Heart left ventricle (tissue), 16 donors: ENCODE measurements at regions of chr9 and their contacts with region 1.

Region 1: GRCh38 chr9:136865735-136866103 is 389 bp downstream of the EDF1 start:
- DNase-seq: peak in 3 of 5 donors; percentile 25 to 49 (median 43)
- ATAC-seq: peak in 2 of 4 donors; percentile 36 to 43
- H3K4me3 ChIP-seq: peak overlapping the region; percentile 41 to 97 (median 82)
- H3K27ac ChIP-seq: peak overlapping the region in 11 of 12 donors; percentile 76 to 96 (median 90)
- H3K4me1 ChIP-seq: peaks cover 0 to 27% (median 19%) of the 10 kb centered on the region in 12 donors
- H3K27me3 ChIP-seq: no peaks in the 10 kb centered on the region
- CTCF ChIP-seq: no peak
- POLR2A ChIP-seq: no peak

Region 2: GRCh38 chr9:136671646-136672430 is 193.9 kb before region 1 on chr9:
- intact Hi-C with region 1: no loop called
- DNase-seq: peak in 2 of 5 donors; percentile 40 to 50
- ATAC-seq: peak in 2 of 4 donors; percentile 2 to 13
- H3K4me3 ChIP-seq: peak overlapping the region in 10 of 12 donors; percentile 1 to 80 (median 50)
- H3K27ac ChIP-seq: peak overlapping the region in 10 of 12 donors; percentile 15 to 89 (median 52)
- H3K4me1 ChIP-seq: peaks cover 0 to 34% (median 3%) of the 10 kb centered on the region in 12 donors
- H3K27me3 ChIP-seq: peaks cover 0 to 7% (median 0%) of the 10 kb centered on the region in 9 donors
- CTCF ChIP-seq: peak; percentile 67 to 85 (median 76)
- POLR2A ChIP-seq: no peak

Region 3: GRCh38 chr9:136814725-136815421 is 50.8 kb before region 1 on chr9:
- intact Hi-C with region 1: loop called in 1 of 10 experiments (anchors 2 kb)
- DNase-seq: no peak
- ATAC-seq: no peak
- H3K4me3 ChIP-seq: no peak overlapping the region
- H3K27ac ChIP-seq: no peak overlapping the region
- H3K4me1 ChIP-seq: peaks cover 0 to 17% (median 11%) of the 10 kb centered on the region in 12 donors
- H3K27me3 ChIP-seq: no peaks in the 10 kb centered on the region
- CTCF ChIP-seq: no peak
- POLR2A ChIP-seq: no peak

Region 4: DNA sequence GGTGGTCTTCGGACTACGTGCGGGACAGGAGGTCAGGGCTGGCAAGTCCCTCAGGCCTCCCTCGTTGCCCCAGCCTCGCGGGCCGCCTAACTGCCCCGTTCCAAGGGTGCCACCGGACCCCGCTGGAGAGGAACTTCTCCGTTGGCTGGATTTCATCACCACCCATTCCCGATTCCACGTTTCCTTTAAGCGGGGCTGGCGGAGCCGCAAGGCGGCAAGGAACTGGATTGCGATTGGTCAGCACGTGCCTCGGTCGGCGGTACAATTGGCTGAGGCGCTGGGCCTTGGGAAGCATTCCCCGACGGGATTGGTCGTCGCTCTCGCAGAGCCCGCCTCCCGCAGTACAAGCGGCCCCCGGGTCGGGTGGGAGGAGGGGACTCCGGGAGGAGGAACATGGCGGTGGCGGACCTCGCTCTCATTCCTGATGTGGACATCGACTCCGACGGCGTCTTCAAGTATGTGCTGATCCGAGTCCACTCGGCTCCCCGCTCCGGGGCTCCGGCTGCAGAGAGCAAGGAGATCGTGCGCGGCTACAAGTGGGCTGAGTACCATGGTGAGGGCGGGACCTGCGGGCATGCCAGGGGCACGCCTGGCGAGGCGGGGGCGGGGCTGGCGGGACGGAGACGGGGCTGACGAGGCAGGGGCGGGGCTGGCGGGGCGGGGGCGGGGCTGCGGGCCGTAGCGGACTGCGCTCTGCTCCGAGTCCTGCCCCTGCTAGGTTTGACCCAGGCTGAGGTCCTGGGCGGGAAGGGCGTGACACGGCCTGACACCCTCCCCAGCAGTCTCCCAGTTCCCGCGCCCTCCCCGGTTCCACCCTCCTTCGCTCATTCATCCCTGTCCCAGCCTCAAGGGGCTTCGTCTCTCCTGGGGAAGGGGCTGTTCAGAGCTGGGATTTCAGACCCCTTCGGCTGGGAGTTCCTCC is 16.4 kb before region 1 on chr9 and contains the start of gene PHPT1:
- intact Hi-C with region 1: loop called in 1 of 10 experiments (anchors 2 kb)
- DNase-seq: peak; percentile 99
- ATAC-seq: peak; percentile 84 to 94 (median 89)
- H3K4me3 ChIP-seq: peak within 1 kb of the TSS; percentile 63 to 93 (median 84)
- H3K27ac ChIP-seq: peak within 1 kb of the TSS; percentile 80 to 97 (median 92)
- H3K4me1 ChIP-seq: peaks cover 4 to 61% (median 27%) of the 10 kb centered on the region in 12 donors
- H3K27me3 ChIP-seq: peaks cover 0 to 28% (median 13%) of the 10 kb centered on the region in 9 donors
- CTCF ChIP-seq: no peak
- POLR2A ChIP-seq: peak; percentile 71 to 85
- total RNA-seq, gene PHPT1: 230 to 386 (median 266) TPM

Region 5: DNA sequence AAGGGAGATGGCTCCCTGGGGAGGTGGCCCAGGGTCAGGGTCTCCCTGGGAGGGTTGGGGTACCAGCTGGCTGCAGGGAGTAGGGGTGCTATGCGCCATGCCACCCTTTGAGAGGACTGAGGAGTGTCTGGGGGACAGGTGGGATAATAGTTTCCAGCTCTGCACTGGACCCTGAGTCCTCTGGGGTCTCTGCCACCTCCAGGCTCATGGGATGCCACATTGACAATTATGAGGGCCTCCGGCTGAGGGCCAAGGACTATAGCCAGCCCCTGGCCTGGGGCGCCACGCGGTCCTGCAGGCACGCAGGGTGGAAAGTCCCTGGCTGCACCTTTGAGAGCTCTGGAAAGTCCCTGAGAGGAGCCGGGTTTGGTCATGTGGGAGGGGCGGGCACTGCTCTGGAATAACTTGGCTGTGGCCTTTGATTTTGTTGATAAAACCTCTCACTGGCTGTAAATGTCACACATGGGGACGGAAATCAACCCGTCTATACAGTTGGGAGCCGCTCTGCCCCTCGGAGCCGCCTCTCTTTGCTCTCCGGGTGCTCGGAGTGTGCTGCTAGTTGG is 36.6 kb after region 1 on chr9:
- intact Hi-C with region 1: loop called in 1 of 10 experiments (anchors 2 kb)
- DNase-seq: peak in 4 of 5 donors; percentile 78 to 85 (median 82)
- ATAC-seq: peak; percentile 84 to 94 (median 91)
- H3K4me3 ChIP-seq: peak overlapping the region in 5 of 12 donors; percentile 1 to 23 (median 11)
- H3K27ac ChIP-seq: peak overlapping the region; percentile 30 to 94 (median 80)
- H3K4me1 ChIP-seq: peaks cover 0 to 37% (median 32%) of the 10 kb centered on the region in 12 donors
- H3K27me3 ChIP-seq: no peaks in the 10 kb centered on the region
- CTCF ChIP-seq: no peak
- POLR2A ChIP-seq: peak in 1 of 2 donors; percentile 25

Region 6: DNA sequence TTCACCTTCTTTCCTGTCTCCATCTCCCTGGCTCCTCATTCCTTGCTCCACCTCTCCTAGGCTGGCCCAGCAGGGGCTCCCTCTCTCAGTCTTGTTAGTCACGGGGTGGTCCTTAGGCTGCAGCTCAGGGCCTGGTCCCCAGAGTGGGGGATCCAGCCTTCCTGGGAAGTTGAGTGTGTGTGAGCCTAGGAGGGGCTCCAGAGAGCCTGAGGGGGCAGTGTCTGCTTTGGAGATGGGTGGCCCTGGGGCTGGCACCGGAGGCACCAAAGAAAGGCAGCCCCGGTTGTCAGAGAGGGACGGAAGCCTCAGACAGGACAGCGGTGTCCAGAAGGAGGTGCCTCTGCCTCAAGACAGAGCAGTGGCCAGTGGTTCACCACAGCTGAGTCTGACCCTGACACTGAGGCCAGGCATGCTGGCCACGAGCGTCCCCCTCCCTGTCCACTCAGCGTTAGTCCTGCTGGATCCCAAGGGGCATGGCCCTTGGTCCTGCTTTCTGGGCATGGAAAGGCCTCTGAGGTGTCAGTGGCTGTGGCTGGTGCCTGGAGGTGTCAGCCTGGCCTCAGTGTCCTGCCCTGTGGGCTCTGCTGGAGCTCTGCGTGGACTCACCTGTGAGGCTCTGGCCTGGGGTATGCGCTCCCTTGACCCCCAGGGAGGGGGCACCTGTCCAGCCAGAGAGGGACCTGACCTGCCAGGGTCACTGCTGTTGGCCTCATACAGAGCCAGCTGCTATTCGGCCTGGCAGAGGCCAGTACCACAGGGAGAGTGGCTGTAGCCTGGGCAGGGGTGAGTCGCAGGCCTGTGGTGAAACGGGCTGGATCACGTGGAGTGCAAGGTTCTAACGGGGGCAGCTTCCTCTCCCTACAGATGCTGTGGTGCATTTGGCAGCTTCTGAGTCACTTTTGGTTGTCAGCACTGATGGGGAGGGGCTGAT is 1142.5 kb after region 1 on chr9:
- intact Hi-C with region 1: no loop called
- DNase-seq: peak in 2 of 5 donors; percentile 11 to 47
- ATAC-seq: peak in 1 of 4 donors; percentile 20
- H3K4me3 ChIP-seq: no peak overlapping the region
- H3K27ac ChIP-seq: no peak overlapping the region
- H3K4me1 ChIP-seq: no peaks in the 10 kb centered on the region
- H3K27me3 ChIP-seq: peaks cover 0 to 3% (median 0%) of the 10 kb centered on the region in 9 donors
- CTCF ChIP-seq: no peak
- POLR2A ChIP-seq: no peak